ENCODE measurements at regions of chr6 and their contacts with region 1.

Region 1: GRCh38 chr6:122491919-122492555 is 20.4 kb upstream of the SERINC1 start:
- DNase-seq: peak; percentile 33 to 72 (median 64)
- ATAC-seq: peak; percentile 98
- H3K4me3 ChIP-seq: no peak overlapping the region
- H3K4me3 Mint-ChIP-seq: peak overlapping the region in 4 of 10 donors; percentile 3 to 55 (median 8)
- H3K27ac ChIP-seq: no peak overlapping the region
- H3K27ac Mint-ChIP-seq: no peak overlapping the region
- H3K4me1 ChIP-seq: no peaks in the 10 kb centered on the region
- H3K4me1 Mint-ChIP-seq: peaks cover 0 to 17% (median 7%) of the 10 kb centered on the region in 7 donors
- H3K27me3 ChIP-seq: peaks cover 0 to 3% of the 10 kb centered on the region in 2 donors
- H3K27me3 Mint-ChIP-seq: peaks cover 0 to 3% (median 2%) of the 10 kb centered on the region in 5 donors

Region 2: GRCh38 chr6:122530440-122531046 is 38.5 kb after region 1 on chr6:
- CTCF ChIA-PET with region 1: interaction called, 94 read pairs
- POLR2A ChIA-PET with region 1: interaction called, 3 read pairs
- intact Hi-C with region 1: loop called (anchors 1 kb)
- DNase-seq: peak in 8 of 9 donors; percentile 36 to 73 (median 64)
- ATAC-seq: peak; percentile 86
- H3K4me3 ChIP-seq: no peak overlapping the region
- H3K4me3 Mint-ChIP-seq: no peak overlapping the region
- H3K27ac ChIP-seq: no peak overlapping the region
- H3K27ac Mint-ChIP-seq: no peak overlapping the region
- H3K4me1 ChIP-seq: no peaks in the 10 kb centered on the region
- H3K4me1 Mint-ChIP-seq: peaks cover 0 to 8% (median 0%) of the 10 kb centered on the region in 7 donors
- H3K27me3 ChIP-seq: no peaks in the 10 kb centered on the region
- H3K27me3 Mint-ChIP-seq: peaks cover 34 to 48% (median 37%) of the 10 kb centered on the region in 5 donors

Region 3: DNA sequence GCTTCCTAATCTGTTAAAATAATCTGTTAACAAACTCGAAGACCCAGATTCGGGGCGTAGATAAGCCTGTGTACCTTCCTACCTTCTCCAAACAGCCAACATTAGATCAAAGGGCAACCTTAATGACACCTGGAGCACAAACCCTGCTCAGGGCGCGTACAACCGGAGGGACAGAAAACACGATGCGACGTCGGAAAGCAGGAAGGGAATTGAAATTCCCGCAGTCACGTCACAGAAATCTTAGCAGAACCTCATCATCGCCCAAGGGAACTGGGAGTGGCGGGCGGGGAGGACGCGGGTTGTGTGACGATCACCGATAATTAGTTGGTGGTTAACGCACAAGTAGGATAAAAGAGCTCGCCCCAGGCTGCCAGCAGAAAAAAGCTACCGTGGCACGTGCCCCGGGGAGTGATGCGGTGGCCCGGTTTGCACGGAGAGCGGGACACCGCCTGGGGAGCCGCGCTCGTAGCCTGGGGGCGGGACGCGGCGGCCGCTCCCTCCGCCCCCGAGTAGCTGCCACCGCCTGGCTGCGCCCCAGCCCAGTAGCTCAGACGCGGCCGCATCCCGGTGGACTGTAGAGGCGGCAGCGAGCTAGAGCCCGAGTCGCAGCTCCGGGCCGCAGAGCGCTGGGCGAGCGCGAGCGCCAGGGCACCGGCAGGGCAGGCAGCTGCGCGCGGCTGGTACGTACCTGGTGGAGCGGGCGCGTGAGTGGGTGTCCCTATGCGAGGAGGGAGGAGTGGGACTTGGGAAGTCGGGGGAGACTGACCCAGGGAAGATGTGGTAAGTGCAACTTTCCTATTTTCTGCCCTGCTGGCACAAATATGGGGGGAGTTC is 118.0 kb after region 1 on chr6 and contains the start of gene PKIB:
- CTCF ChIA-PET with region 1: no interaction called
- POLR2A ChIA-PET with region 1: no interaction called
- intact Hi-C with region 1: loop called in 1 of 2 experiments (anchors 2 kb)
- DNase-seq: peak; percentile 2 to 59 (median 18)
- ATAC-seq: peak; percentile 85
- H3K4me3 ChIP-seq: peak within 1 kb of the TSS; percentile 78
- H3K4me3 Mint-ChIP-seq: peak within 1 kb of the TSS; percentile 88 to 95 (median 91)
- H3K27ac ChIP-seq: no peak within 1 kb of the TSS
- H3K27ac Mint-ChIP-seq: peak within 1 kb of the TSS in 6 of 9 donors; percentile 18 to 84 (median 56)
- H3K4me1 ChIP-seq: peaks cover 6 to 7% of the 10 kb centered on the region in 2 donors
- H3K4me1 Mint-ChIP-seq: peaks cover 5 to 21% (median 16%) of the 10 kb centered on the region in 7 donors
- H3K27me3 ChIP-seq: peaks cover 0 to 12% of the 10 kb centered on the region in 2 donors
- H3K27me3 Mint-ChIP-seq: peaks cover 14 to 52% (median 46%) of the 10 kb centered on the region in 5 donors
- total RNA-seq, gene PKIB: 0.86 to 1.5 (median 0.91) TPM in 4 of 5 experiments, not detected in the other

Region 4: DNA sequence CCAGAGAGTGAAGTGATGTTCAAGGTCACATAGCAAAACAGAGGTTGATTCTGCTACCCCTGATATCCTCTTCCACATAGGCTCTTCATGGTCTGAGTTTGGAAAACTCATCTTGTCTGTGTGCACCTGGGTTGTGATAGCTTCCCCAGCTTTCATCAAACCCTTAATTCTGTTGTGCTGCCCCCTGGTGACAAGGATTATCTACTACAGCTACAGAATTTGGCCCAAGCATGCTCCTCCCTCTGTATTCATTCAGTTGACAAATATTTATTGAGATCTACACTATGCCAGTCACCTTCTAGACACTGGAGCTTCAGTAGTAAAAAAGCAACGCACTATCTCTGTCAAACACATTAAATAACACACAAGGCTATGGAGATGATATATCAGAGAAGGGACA is 347.4 kb after region 1 on chr6:
- CTCF ChIA-PET with region 1: no interaction called
- POLR2A ChIA-PET with region 1: no interaction called
- intact Hi-C with region 1: loop called (anchors 1 kb)
- DNase-seq: peak in 7 of 9 donors; percentile 18 to 47 (median 36)
- ATAC-seq: peak; percentile 79
- H3K4me3 ChIP-seq: no peak overlapping the region
- H3K4me3 Mint-ChIP-seq: no peak overlapping the region
- H3K27ac ChIP-seq: no peak overlapping the region
- H3K27ac Mint-ChIP-seq: no peak overlapping the region
- H3K4me1 ChIP-seq: no peaks in the 10 kb centered on the region
- H3K4me1 Mint-ChIP-seq: no peaks in the 10 kb centered on the region
- H3K27me3 ChIP-seq: no peaks in the 10 kb centered on the region
- H3K27me3 Mint-ChIP-seq: peaks cover 2 to 26% (median 9%) of the 10 kb centered on the region in 5 donors

Region 5: GRCh38 chr6:123316733-123317323 is 824.8 kb after region 1 on chr6:
- CTCF ChIA-PET with region 1: no interaction called
- POLR2A ChIA-PET with region 1: no interaction called
- intact Hi-C with region 1: loop called (anchors 5 kb)
- DNase-seq: peak in 2 of 9 donors; percentile 1 to 14
- ATAC-seq: no peak
- H3K4me3 ChIP-seq: no peak overlapping the region
- H3K4me3 Mint-ChIP-seq: no peak overlapping the region
- H3K27ac ChIP-seq: no peak overlapping the region
- H3K27ac Mint-ChIP-seq: no peak overlapping the region
- H3K4me1 ChIP-seq: no peaks in the 10 kb centered on the region
- H3K4me1 Mint-ChIP-seq: no peaks in the 10 kb centered on the region
- H3K27me3 ChIP-seq: no peaks in the 10 kb centered on the region
- H3K27me3 Mint-ChIP-seq: no peaks in the 10 kb centered on the region

Measured in naive thymus-derived CD4-positive, alpha-beta T cell (primary cell).